ENCODE measurements at regions of chr14 and their contacts with region 1.

Region 1: DNA sequence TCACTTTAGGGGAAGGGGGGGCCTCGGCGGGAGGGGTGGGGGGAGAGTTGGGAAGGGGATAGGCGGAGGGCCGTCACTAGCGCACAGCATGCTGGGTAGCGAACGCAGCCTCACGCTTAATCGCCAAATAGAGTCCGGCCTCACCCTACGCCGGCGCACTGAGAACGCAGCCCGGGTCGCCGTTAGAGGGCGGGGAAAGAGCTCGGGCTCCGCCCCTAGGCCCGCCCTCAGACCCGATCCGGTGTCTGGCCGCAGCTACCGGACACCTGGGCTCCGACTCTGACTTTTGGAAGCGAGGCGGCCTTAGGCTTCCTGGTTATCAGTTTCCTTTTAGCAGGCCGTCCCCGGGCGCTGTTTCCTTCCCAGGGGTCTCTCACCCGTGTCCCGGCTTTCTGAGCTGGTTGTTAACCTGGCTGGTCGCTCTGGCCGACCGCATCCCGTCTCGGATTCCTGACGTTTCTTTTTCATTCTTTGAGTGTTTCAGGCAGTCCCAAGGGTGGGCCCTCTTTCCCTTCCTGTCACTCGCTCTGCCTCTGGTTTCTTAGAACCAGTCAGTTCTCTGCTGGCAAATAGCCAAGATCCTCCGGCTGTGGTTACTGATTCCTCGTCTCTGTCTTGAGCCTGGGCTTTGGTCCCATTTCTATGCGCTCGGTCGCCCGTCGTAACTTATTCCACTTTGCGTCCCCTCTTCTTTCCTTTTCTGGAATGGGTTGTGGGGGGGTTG is 378 bp upstream of the STRN3 start:
- DNase-seq: peak; percentile 92
- H3K4me3 Mint-ChIP-seq: peak overlapping the region; percentile 96
- H3K27ac Mint-ChIP-seq: peak overlapping the region; percentile 96
- H3K4me1 Mint-ChIP-seq: peaks cover 55% of the 10 kb centered on the region
- H3K27me3 Mint-ChIP-seq: no peaks in the 10 kb centered on the region

Region 2: DNA sequence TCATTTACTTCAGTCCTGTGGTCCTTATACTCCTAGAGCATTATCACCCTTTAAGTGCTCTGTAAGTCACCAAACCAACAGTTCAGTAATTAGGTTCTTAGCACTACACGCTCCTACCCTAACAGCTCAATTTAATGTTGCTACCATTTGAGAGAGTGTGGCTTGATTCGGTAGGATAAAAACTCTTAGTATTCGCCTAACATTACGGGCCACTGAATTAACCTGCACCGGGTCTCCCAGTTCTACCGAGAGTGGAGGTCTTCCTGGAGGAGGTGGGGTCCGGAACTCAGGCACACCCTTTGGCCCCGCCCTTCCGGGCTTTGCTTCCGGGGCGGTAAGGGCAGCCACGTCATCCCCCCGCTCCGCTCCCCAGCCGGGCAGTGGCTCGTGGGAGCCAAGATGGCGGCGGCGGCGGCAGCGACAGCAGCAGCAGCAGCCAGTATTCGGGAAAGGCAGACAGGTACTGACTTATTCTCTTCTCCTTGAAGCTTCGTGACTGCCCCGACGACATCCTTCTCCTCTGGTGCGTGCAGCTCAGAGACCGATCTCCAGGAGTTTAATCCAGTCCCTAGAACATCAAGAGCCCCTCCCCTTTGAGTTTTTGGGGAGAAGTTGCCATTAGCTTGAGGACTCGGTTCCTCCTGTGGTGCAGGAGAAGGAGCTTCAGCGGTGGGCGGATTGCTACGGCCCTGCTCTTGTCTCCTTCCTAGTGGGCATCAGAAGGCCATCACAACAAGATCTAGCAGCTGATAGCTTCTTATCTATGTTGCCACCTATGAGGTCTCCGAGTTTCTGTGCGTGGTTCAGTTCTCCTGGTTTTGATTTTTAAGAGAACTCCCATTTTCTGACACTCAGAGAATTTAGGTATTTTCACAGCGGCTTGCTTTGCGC is 404.4 kb before region 1 on chr14 and contains the start of gene SCFD1:
- CTCF ChIA-PET with region 1: no interaction called
- intact Hi-C with region 1: loop called (anchors 1 kb)
- DNase-seq: peak; percentile 95
- H3K4me3 Mint-ChIP-seq: peak within 1 kb of the TSS; percentile 96
- H3K27ac Mint-ChIP-seq: peak within 1 kb of the TSS; percentile 94
- H3K4me1 Mint-ChIP-seq: peaks cover 35% of the 10 kb centered on the region
- H3K27me3 Mint-ChIP-seq: no peaks in the 10 kb centered on the region
- total RNA-seq, gene SCFD1: 46.1 to 55.2 TPM

Region 3: GRCh38 chr14:30943694-30944093 is 82.9 kb before region 1 on chr14:
- CTCF ChIA-PET with region 1: no interaction called
- intact Hi-C with region 1: no loop called
- DNase-seq: no peak
- H3K4me3 Mint-ChIP-seq: no peak overlapping the region
- H3K27ac Mint-ChIP-seq: no peak overlapping the region
- H3K4me1 Mint-ChIP-seq: no peaks in the 10 kb centered on the region
- H3K27me3 Mint-ChIP-seq: no peaks in the 10 kb centered on the region

Region 4: GRCh38 chr14:30966415-30967363 is 59.9 kb before region 1 on chr14:
- CTCF ChIA-PET with region 1: no interaction called
- intact Hi-C with region 1: loop called (anchors 1 kb)
- DNase-seq: no peak
- H3K4me3 Mint-ChIP-seq: no peak overlapping the region
- H3K27ac Mint-ChIP-seq: no peak overlapping the region
- H3K4me1 Mint-ChIP-seq: peaks cover 32% of the 10 kb centered on the region
- H3K27me3 Mint-ChIP-seq: no peaks in the 10 kb centered on the region

Region 5: DNA sequence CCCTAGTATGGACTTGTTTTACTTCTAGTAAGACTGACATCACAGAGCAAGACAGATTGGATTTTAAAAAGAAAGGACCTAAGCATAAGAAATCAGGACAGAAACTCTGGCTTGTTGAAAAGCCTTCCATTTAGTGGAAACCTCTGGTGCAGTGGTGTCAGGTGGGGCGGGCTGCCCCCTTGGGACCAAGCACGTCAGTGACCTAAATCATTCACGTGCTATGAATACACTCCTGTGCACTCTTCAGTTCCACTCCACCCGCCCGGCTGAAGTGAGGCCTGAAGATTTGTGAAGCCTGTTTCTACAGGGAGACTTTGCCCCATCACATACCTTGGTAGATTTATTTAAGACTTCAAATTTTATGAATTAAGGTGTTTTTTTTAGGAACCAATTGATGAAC is 57.8 kb after region 1 on chr14:
- CTCF ChIA-PET with region 1: interaction called, 3 read pairs
- intact Hi-C with region 1: loop called (anchors 1 kb)
- DNase-seq: no peak
- H3K4me3 Mint-ChIP-seq: no peak overlapping the region
- H3K27ac Mint-ChIP-seq: no peak overlapping the region
- H3K4me1 Mint-ChIP-seq: no peaks in the 10 kb centered on the region
- H3K27me3 Mint-ChIP-seq: no peaks in the 10 kb centered on the region

Region 6: DNA sequence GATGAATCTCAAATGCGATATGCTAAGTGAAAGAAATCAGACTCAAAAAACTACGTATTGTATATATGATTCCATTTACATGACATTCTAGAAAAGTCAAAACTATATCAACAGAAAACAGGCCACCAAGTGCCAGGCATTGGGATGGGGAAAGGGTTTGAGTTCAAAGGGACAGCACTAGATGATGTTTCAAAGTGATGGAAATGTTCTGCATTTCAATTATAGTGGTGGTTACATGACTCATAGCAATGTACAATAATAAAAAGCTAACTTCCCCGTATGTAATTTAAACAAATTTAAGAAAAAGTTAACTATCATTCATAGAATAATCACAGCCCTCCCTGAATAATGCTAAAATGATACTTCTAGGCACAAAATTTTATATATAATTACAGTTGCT is 167.5 kb after region 1 on chr14:
- CTCF ChIA-PET with region 1: no interaction called
- intact Hi-C with region 1: loop called (anchors 2 kb)
- DNase-seq: peak; percentile 30
- H3K4me3 Mint-ChIP-seq: no peak overlapping the region
- H3K27ac Mint-ChIP-seq: no peak overlapping the region
- H3K4me1 Mint-ChIP-seq: peaks cover 46% of the 10 kb centered on the region
- H3K27me3 Mint-ChIP-seq: no peaks in the 10 kb centered on the region

Region 7: DNA sequence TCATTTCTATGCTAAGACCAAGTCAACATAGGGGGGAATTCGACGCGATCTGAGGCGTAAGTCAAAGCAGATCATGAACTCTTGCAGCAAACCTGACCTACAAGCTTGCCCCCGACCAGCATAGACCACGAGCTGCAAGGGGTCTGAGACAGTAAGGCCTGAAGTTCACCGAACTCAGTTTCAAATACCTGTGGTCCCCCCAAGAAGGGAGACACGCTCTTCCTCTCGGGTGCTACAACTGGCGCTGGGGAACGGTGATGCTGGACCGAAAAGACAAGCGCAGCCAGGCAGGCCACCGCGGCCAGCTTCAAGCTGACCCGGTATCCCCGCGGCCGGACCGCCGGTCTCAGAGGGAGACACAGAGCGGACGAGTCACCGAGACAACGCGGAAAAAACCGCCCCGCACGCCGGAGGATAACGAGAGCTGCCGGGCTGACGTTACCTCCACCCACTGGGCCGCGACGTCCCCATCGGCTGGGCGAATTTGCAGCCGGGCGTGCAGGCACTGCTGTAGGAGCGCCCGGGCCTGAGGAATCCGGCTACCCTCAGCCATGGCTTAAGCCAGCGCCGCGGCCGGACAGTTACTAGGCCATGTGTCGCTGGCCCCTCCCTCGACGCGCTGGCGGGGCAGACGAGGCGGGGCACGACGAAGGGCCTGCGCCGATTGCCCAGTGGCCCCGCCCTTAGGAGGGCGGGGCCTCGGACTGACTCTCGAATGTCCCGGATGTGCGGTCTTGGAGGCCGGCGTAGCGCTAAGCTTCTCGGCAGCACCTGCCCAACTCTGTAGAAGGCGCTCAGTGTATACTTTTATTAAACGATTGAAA is 430.5 kb after region 1 on chr14 and contains the start of gene DTD2:
- CTCF ChIA-PET with region 1: no interaction called
- intact Hi-C with region 1: loop called (anchors 1 kb)
- DNase-seq: peak; percentile 93
- H3K4me3 Mint-ChIP-seq: peak within 1 kb of the TSS; percentile 94
- H3K27ac Mint-ChIP-seq: peak within 1 kb of the TSS; percentile 88
- H3K4me1 Mint-ChIP-seq: peaks cover 29% of the 10 kb centered on the region
- H3K27me3 Mint-ChIP-seq: no peaks in the 10 kb centered on the region
- total RNA-seq, gene DTD2: 12.9 to 13.3 TPM

Measured in activated naive CD4-positive, alpha-beta T cell treated with anti-CD3 and anti-CD28 coated beads for 36 hours (primary cell).